GM12878 (cell line): ENCODE measurements at regions of chr16 and their contacts with region 1.

Region 1: GRCh38 chr16:81752225-81752875 is 26.7 kb upstream of the PLCG2 start:
- DNase-seq: peak; percentile 72
- ATAC-seq: peak; percentile 97
- H3K4me3 ChIP-seq: peak overlapping the region; percentile 54; the same call in 1 of the 2 replicates
- H3K27ac ChIP-seq: peak overlapping the region; percentile 68
- H3K4me1 ChIP-seq: peaks cover 46% of the 10 kb centered on the region
- H3K27me3 ChIP-seq: no peaks in the 10 kb centered on the region
- CTCF ChIP-seq: no peak
- EP300 ChIP-seq: peak in 1 of 2 experiments; percentile 86; a peak in 3 of 4 replicates
- POLR2A ChIP-seq: peak; percentile 86
- RAD21 ChIP-seq: no peak

Region 2: GRCh38 chr16:81469710-81470535 is 282.4 kb before region 1 on chr16:
- CTCF ChIA-PET with region 1: no interaction called
- POLR2A ChIA-PET with region 1: no interaction called
- RAD21 ChIA-PET with region 1: no interaction called
- SMC1A ChIA-PET with region 1: no interaction called
- in situ Hi-C with region 1: no loop called
- intact Hi-C with region 1: no loop called
- DNase-seq: peak; percentile 65
- ATAC-seq: peak; percentile 90
- H3K4me3 ChIP-seq: peak overlapping the region; percentile 33; the same call in 1 of the 2 replicates
- H3K27ac ChIP-seq: peak overlapping the region; percentile 74
- H3K4me1 ChIP-seq: peaks cover 29% of the 10 kb centered on the region
- H3K27me3 ChIP-seq: no peaks in the 10 kb centered on the region
- CTCF ChIP-seq: no peak
- EP300 ChIP-seq: no peak
- POLR2A ChIP-seq: no peak
- RAD21 ChIP-seq: 0 out of 2 replicates have a peak, but pooled peaks have one; percentile 9

Region 3: DNA sequence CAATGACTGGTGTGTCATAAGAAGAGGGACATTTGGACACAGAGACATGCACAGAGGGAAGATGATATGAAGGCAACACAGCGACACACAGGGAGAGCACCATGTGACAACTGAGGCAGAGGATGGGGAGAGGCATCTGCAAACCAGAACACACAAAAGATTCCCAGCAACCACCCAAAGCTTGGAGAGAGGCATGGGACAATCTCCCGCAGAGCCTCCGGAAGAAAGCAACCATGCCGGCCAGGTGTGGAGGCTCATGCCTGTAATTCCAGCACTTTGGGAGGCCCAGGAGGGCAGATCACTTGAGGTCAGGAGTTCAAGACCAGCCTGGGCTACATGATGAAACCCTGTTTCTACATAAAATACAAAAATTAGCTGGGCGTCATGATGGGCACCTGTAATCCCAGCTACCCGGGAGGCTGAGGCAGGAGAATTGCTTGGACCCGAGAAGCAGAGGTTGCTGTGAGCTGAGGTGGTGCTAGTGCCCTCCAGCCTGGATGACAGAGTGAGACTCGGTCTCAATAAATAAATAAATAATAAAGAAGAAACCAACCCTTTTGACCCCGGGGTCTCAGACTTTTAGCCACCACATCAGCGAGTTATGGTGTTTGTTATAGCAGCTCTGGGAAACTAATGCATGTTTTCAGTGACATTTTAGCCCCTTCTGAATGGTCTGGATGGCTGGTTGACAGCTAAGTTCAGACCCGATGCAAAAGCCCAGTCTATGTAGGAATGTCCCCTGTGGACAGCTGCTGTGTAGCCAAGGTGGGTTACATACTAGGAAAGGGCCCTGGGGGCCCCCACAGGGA is 13.0 kb after region 1 on chr16:
- CTCF ChIA-PET with region 1: interaction called, 8 read pairs
- POLR2A ChIA-PET with region 1: interaction called, 7 read pairs
- RAD21 ChIA-PET with region 1: interaction called, 32 read pairs
- SMC1A ChIA-PET with region 1: interaction called, 11 read pairs
- in situ Hi-C with region 1: no loop called
- intact Hi-C with region 1: no loop called
- DNase-seq: no peak
- ATAC-seq: no peak
- H3K4me3 ChIP-seq: no peak overlapping the region
- H3K27ac ChIP-seq: no peak overlapping the region
- H3K4me1 ChIP-seq: peaks cover 7% of the 10 kb centered on the region
- H3K27me3 ChIP-seq: no peaks in the 10 kb centered on the region
- CTCF ChIP-seq: no peak
- EP300 ChIP-seq: no peak
- POLR2A ChIP-seq: no peak
- RAD21 ChIP-seq: no peak

Region 4: GRCh38 chr16:81786321-81786720 is 34.0 kb after region 1 on chr16:
- CTCF ChIA-PET with region 1: interaction called, 16 read pairs
- POLR2A ChIA-PET with region 1: interaction called, 11 read pairs
- RAD21 ChIA-PET with region 1: interaction called, 11 read pairs
- SMC1A ChIA-PET with region 1: interaction called, 65 read pairs
- in situ Hi-C with region 1: no loop called
- intact Hi-C with region 1: loop called (anchors 5 kb)
- DNase-seq: no peak
- ATAC-seq: no peak
- H3K4me3 ChIP-seq: peak overlapping the region; percentile 75
- H3K27ac ChIP-seq: peak overlapping the region; percentile 60
- H3K4me1 ChIP-seq: peaks cover 42% of the 10 kb centered on the region
- H3K27me3 ChIP-seq: no peaks in the 10 kb centered on the region
- CTCF ChIP-seq: no peak
- EP300 ChIP-seq: no peak
- POLR2A ChIP-seq: no peak
- RAD21 ChIP-seq: no peak

Region 5: GRCh38 chr16:81798311-81799137 is 46.2 kb after region 1 on chr16:
- CTCF ChIA-PET with region 1: interaction called, 4 read pairs
- POLR2A ChIA-PET with region 1: interaction called, 10 read pairs
- RAD21 ChIA-PET with region 1: interaction called, 13 read pairs
- SMC1A ChIA-PET with region 1: interaction called, 21 read pairs
- in situ Hi-C with region 1: no loop called
- intact Hi-C with region 1: no loop called
- DNase-seq: peak; percentile 97
- ATAC-seq: peak; percentile 76
- H3K4me3 ChIP-seq: peak overlapping the region; percentile 62
- H3K27ac ChIP-seq: peak overlapping the region; percentile 98
- H3K4me1 ChIP-seq: peaks cover 52% of the 10 kb centered on the region
- H3K27me3 ChIP-seq: no peaks in the 10 kb centered on the region
- CTCF ChIP-seq: peak in 2 of 3 experiments; percentile 27 to 36; a peak in 4 of 6 replicates
- EP300 ChIP-seq: peak; percentile 80 to 84; a peak in 3 of 4 replicates
- POLR2A ChIP-seq: peak; percentile 50; the same call in 1 of the 2 replicates
- RAD21 ChIP-seq: no peak; the same call in 1 of the 2 replicates

Region 6: DNA sequence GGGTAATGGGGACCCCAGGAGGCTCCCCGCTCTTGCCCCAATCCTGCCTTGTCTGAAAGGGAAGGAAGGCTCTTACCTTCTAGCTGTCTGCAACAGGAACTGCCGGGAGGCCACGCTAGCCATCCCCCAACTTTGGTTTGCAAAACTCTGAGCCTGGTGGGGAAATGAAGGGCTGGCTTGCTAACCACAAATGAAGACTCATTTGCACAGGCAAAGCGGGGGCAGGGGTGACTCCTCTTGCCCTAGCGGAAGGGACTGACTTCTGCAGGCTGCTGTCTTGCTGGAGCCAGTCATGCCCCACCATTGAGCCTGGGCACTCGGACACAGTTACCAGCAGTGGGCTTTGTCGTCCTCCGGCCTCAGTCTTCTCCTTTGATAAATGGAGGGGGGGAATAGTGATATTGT is 79.4 kb after region 1 on chr16:
- CTCF ChIA-PET with region 1: interaction called, 4 read pairs
- POLR2A ChIA-PET with region 1: interaction called, 4 read pairs
- RAD21 ChIA-PET with region 1: interaction called, 10 read pairs
- SMC1A ChIA-PET with region 1: interaction called, 3 read pairs
- in situ Hi-C with region 1: no loop called
- intact Hi-C with region 1: no loop called
- DNase-seq: peak; percentile 82
- ATAC-seq: peak; percentile 91
- H3K4me3 ChIP-seq: peak overlapping the region; percentile 64
- H3K27ac ChIP-seq: peak overlapping the region; percentile 95
- H3K4me1 ChIP-seq: peaks cover 87% of the 10 kb centered on the region
- H3K27me3 ChIP-seq: no peaks in the 10 kb centered on the region
- CTCF ChIP-seq: peak; percentile 20 to 60 (median 55); a peak in 5 of 6 replicates
- EP300 ChIP-seq: 0 out of 4 replicates have a peak, but pooled peaks have one; percentile 25 to 56
- POLR2A ChIP-seq: peak; percentile 77
- RAD21 ChIP-seq: peak; percentile 42

Region 7: DNA sequence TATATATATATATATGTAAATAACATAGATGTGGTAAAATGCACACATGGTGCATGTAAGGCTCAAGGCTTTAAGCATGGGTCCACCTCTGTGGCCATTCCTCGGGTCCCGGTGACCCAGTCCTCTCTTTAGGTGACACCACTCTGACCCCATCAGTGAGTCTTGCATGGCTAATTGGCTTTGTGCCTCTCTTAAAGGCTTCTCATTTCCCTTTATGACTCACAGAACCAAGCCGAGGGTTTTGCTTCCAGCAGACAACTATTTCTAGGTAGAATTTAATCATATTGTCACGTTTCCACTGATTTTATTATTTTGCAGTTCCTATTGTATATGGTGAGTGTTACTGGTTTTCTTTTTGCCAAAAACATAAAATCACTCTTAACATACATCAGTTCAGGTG is 86.4 kb after region 1 on chr16:
- CTCF ChIA-PET with region 1: interaction called, 9 read pairs
- POLR2A ChIA-PET with region 1: interaction called, 5 read pairs
- RAD21 ChIA-PET with region 1: interaction called, 6 read pairs
- SMC1A ChIA-PET with region 1: interaction called, 11 read pairs
- in situ Hi-C with region 1: no loop called
- intact Hi-C with region 1: no loop called
- DNase-seq: peak; percentile 57
- ATAC-seq: peak; percentile 64
- H3K4me3 ChIP-seq: no peak overlapping the region
- H3K27ac ChIP-seq: peak overlapping the region; percentile 54
- H3K4me1 ChIP-seq: peaks cover 87% of the 10 kb centered on the region
- H3K27me3 ChIP-seq: no peaks in the 10 kb centered on the region
- CTCF ChIP-seq: no peak
- EP300 ChIP-seq: peak; percentile 26 to 53; a peak in 2 of 4 replicates
- POLR2A ChIP-seq: peak; percentile 44; the same call in 1 of the 2 replicates
- RAD21 ChIP-seq: no peak